ENCODE measurements at regions of chr3 and their contacts with region 1.

Region 1: DNA sequence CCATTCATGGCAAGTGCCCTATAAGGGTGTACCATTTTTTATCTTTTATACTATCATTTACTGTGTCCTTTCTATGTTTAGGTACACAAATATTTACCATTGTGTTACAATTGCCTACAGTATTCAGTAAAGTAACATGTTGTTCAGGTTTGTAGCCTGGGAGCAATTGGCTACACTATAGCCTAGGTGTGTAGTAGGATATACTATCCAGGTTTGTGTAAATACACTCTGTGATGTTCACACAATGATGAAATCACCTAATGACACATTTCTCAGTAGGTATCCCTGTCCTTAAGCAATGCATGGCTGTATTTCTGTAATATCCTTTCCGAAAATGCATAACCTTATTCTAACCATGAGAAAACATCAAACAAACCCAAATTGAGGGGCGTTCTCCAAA is 17.9 kb upstream of the CNOT10 start:
- DNase-seq: no peak

Region 2: DNA sequence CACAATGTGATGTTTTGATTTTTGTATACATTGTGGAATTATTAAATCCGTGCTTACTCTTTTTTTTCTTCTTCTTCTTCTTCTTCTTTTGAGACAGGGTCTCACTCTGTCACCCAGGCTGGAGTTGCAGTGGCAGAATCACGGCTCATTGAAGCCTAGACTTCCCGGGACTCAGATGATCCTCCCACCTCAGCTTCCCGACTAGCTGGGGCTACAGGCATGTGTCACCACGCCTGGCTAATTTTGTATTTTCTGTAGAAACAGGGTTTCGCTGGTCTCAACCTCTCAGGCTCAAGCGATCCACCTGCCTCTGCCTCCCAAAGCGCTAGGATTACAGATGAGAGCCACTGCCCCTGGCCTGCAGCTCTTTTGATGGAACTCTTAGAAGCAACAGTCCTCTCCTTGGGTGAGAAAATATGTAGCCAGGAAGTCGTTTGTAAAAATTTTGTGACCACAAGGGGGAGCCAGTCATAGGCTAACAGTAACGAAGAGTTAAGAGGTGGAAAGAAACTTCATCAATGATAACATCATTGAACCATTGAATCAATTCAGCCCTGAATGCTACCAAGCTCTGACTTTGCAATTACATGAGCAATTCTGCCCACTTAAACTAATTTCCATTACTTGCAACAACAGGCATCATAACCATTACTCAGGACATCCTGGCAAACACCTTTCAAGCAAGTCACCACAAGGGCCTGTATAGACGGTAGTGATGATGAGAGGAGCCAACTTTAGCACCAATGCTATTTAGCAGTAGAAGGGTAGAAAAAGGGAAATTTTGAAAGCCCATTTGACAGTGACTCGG is 292.1 kb before region 1 on chr3:
- intact Hi-C with region 1: loop called (anchors 10 kb)
- DNase-seq: peak in 3 of 10 donors; percentile 25 to 40 (median 34)

Region 3: GRCh38 chr3:32510075-32510724 is 156.9 kb before region 1 on chr3:
- intact Hi-C with region 1: loop called (anchors 1 kb)
- DNase-seq: peak in 7 of 10 donors; percentile 33 to 93 (median 72)

Measured in posterior cingulate gyrus (tissue), 11 donors.